B cell (primary cell): ENCODE measurements at regions of chr16 and their contacts with region 1.

Region 1: DNA sequence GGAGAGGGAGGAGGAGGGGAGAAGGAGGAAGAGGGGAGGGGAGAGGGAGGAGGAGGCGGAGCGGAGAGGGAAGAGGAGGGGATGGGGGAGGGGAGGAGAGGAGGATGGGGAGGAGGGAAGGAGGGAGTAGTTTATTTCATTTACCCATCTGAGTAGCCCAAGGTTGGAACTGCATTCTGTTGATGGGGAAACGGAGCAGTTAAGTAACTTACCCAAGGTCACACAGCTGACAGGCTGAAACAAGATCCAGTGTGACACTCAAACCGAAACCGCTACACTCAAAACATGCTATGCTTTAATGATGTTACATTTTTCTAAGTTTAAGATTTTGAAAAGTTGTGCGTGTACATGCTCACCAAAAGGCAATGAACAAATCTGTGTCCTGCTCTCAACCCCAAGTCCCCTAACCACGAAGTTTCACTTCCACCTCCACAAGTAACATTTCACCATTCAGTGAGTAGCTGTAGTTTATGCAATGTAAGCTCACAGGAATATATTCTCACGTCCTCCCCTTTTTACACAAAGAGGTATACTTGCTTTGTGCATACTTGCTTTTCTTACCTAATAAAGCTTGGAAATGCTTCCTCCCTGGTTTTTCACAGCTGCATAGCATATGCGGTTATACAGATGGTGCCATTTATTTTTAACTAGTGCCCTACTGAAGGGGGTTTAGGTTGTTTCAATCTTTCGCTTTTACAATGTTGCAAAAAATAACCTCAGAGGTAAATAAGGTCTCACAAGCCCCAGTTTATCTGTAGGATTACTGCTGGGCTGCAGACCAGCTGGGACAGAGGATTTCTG is 275.3 kb downstream of the PARN start:
- DNase-seq: peak; percentile 91
- ATAC-seq: peak; percentile 94
- H3K4me3 ChIP-seq: peak overlapping the region in 3 of 5 experiments; percentile 16 to 59 (median 48)
- H3K4me3 Mint-ChIP-seq: peak overlapping the region; percentile 30
- H3K27ac ChIP-seq: peak overlapping the region; percentile 39 to 61
- H3K27ac Mint-ChIP-seq: peak overlapping the region; percentile 43
- H3K4me1 ChIP-seq: peaks cover 8 to 25% of the 10 kb centered on the region in 2 donors
- H3K4me1 Mint-ChIP-seq: peaks cover 29% of the 10 kb centered on the region
- H3K27me3 ChIP-seq: no peaks in the 10 kb centered on the region
- H3K27me3 Mint-ChIP-seq: no peaks in the 10 kb centered on the region
- CTCF ChIP-seq: no peak

Region 2: GRCh38 chr16:14121142-14121541 is 233.6 kb before region 1 on chr16:
- CTCF ChIA-PET with region 1: no interaction called
- POLR2A ChIA-PET with region 1: no interaction called
- intact Hi-C with region 1: no loop called
- DNase-seq: no peak
- ATAC-seq: no peak
- H3K4me3 ChIP-seq: no peak overlapping the region
- H3K4me3 Mint-ChIP-seq: no peak overlapping the region
- H3K27ac ChIP-seq: no peak overlapping the region
- H3K27ac Mint-ChIP-seq: no peak overlapping the region
- H3K4me1 ChIP-seq: peaks cover 0 to 5% of the 10 kb centered on the region in 2 donors
- H3K4me1 Mint-ChIP-seq: peaks cover 32% of the 10 kb centered on the region
- H3K27me3 ChIP-seq: no peaks in the 10 kb centered on the region
- H3K27me3 Mint-ChIP-seq: no peaks in the 10 kb centered on the region
- CTCF ChIP-seq: no peak

Region 3: DNA sequence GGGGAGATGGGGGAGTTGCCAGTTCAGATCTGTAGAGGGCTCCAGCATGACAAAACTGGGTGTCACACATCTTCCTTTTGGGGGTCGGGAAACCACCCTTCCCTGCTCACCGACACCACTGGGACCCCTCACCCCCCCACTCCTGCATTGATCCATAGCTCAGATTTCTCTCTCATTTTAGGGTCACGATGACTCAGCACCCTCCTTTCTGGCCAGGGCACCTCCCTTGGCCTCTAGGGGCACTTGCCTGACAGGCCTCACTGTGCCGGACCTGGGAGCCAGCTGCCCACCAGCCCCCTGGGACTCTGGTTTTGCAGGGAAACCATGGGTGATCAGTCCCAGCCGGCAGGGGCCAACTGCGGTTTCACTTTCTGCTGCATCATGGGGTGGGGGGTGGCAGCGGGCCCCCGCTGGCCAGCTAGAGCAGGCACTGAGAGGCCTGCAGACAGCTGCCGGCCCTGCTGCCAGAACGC is 44.2 kb before region 1 on chr16:
- CTCF ChIA-PET with region 1: no interaction called
- POLR2A ChIA-PET with region 1: interaction called, 9 read pairs
- intact Hi-C with region 1: loop called (anchors 1 kb)
- DNase-seq: peak; percentile 28
- ATAC-seq: peak; percentile 62
- H3K4me3 ChIP-seq: no peak overlapping the region
- H3K4me3 Mint-ChIP-seq: peak overlapping the region; percentile 54
- H3K27ac ChIP-seq: no peak overlapping the region
- H3K27ac Mint-ChIP-seq: no peak overlapping the region
- H3K4me1 ChIP-seq: peaks cover 22 to 27% of the 10 kb centered on the region in 2 donors
- H3K4me1 Mint-ChIP-seq: peaks cover 23% of the 10 kb centered on the region
- H3K27me3 ChIP-seq: peaks cover 0 to 5% (median 0%) of the 10 kb centered on the region in 4 experiments
- H3K27me3 Mint-ChIP-seq: peaks cover 4% of the 10 kb centered on the region
- CTCF ChIP-seq: no peak

Region 4: GRCh38 chr16:14372471-14372870 is 17.7 kb after region 1 on chr16:
- CTCF ChIA-PET with region 1: interaction called, 3 read pairs
- POLR2A ChIA-PET with region 1: interaction called, 10 read pairs
- intact Hi-C with region 1: no loop called
- DNase-seq: no peak
- ATAC-seq: no peak
- H3K4me3 ChIP-seq: no peak overlapping the region
- H3K4me3 Mint-ChIP-seq: no peak overlapping the region
- H3K27ac ChIP-seq: no peak overlapping the region
- H3K27ac Mint-ChIP-seq: no peak overlapping the region
- H3K4me1 ChIP-seq: no peaks in the 10 kb centered on the region
- H3K4me1 Mint-ChIP-seq: no peaks in the 10 kb centered on the region
- H3K27me3 ChIP-seq: no peaks in the 10 kb centered on the region
- H3K27me3 Mint-ChIP-seq: no peaks in the 10 kb centered on the region
- CTCF ChIP-seq: no peak

Region 5: DNA sequence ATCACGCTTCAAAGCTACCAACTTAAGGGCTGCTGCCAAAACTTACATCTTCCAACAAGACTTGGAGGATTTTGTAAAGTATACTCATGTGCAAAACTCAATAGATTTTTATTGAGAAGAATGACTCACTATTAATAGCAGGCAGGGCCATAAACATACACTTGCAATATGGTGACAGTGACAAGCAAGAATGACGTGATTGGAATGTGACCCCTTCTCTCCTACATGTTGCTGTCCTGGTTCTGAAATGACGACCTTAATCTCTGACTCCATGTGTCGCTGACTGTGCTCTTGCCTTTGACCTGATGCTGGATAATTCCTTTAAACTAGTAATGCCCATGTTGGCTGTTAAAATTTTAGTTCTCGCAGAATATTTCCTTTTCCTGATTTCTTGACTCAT is 100.8 kb after region 1 on chr16:
- CTCF ChIA-PET with region 1: no interaction called
- POLR2A ChIA-PET with region 1: no interaction called
- intact Hi-C with region 1: no loop called
- DNase-seq: no peak
- ATAC-seq: no peak
- H3K4me3 ChIP-seq: no peak overlapping the region
- H3K4me3 Mint-ChIP-seq: no peak overlapping the region
- H3K27ac ChIP-seq: no peak overlapping the region
- H3K27ac Mint-ChIP-seq: no peak overlapping the region
- H3K4me1 ChIP-seq: no peaks in the 10 kb centered on the region
- H3K4me1 Mint-ChIP-seq: no peaks in the 10 kb centered on the region
- H3K27me3 ChIP-seq: no peaks in the 10 kb centered on the region
- H3K27me3 Mint-ChIP-seq: no peaks in the 10 kb centered on the region
- CTCF ChIP-seq: no peak

Region 6: GRCh38 chr16:14501331-14502255 is 146.8 kb after region 1 on chr16:
- CTCF ChIA-PET with region 1: no interaction called
- POLR2A ChIA-PET with region 1: no interaction called
- intact Hi-C with region 1: no loop called
- DNase-seq: no peak
- ATAC-seq: no peak
- H3K4me3 ChIP-seq: no peak overlapping the region
- H3K4me3 Mint-ChIP-seq: no peak overlapping the region
- H3K27ac ChIP-seq: no peak overlapping the region
- H3K27ac Mint-ChIP-seq: no peak overlapping the region
- H3K4me1 ChIP-seq: no peaks in the 10 kb centered on the region
- H3K4me1 Mint-ChIP-seq: peaks cover 4% of the 10 kb centered on the region
- H3K27me3 ChIP-seq: no peaks in the 10 kb centered on the region
- H3K27me3 Mint-ChIP-seq: no peaks in the 10 kb centered on the region
- CTCF ChIP-seq: no peak

Region 7: GRCh38 chr16:14641926-14642325 is 287.2 kb after region 1 on chr16:
- CTCF ChIA-PET with region 1: no interaction called
- POLR2A ChIA-PET with region 1: no interaction called
- intact Hi-C with region 1: no loop called
- DNase-seq: no peak
- ATAC-seq: no peak
- H3K4me3 ChIP-seq: no peak overlapping the region
- H3K4me3 Mint-ChIP-seq: no peak overlapping the region
- H3K27ac ChIP-seq: peak overlapping the region in 1 of 2 donors; percentile 3
- H3K27ac Mint-ChIP-seq: peak overlapping the region; percentile 15
- H3K4me1 ChIP-seq: peaks cover 0 to 4% of the 10 kb centered on the region in 2 donors
- H3K4me1 Mint-ChIP-seq: peaks cover 26% of the 10 kb centered on the region
- H3K27me3 ChIP-seq: no peaks in the 10 kb centered on the region
- H3K27me3 Mint-ChIP-seq: no peaks in the 10 kb centered on the region
- CTCF ChIP-seq: no peak

Region 8: DNA sequence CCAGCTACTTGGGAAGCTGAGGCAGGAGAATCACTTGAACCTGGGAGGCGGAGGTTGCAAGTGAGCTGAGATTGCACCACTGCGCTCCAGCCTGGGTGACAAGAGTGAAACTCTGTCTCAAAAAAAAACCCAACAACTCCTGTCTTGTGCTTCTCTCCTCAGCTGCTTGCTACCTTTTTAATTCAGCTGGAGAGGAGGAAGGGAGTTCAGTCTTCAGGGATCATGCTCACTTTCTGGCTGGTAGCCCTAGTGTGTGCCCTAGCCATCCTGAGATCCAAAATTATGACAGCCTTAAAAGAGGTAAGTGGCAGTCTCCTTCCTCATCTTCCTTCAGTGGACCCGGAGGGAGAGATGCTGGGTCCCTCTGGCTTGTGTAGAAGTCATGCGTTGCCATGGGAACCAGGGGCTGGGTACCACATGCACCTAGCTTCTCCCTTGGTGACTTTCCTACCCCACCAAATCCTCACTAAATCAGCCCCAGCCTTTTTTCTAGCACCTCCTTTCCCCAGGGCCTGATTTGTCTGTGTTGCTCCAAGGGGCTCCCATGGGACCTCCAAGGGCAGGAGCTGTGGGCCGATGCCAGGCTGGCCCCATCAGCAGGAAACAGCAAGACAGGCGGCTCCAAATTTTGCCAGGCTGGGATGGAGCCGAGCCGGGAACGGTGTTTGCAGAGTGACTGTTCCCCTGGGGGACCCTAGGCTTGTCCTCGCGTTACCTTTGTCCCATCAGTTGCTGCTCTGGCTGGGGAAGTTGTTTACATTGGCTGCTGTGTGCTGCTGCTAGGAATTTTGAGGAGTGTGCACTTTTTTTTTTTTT is 1659.8 kb after region 1 on chr16:
- CTCF ChIA-PET with region 1: no interaction called
- POLR2A ChIA-PET with region 1: interaction called, 11 read pairs
- intact Hi-C with region 1: no loop called
- DNase-seq: no peak
- ATAC-seq: no peak
- H3K4me3 ChIP-seq: no peak overlapping the region
- H3K4me3 Mint-ChIP-seq: no peak overlapping the region
- H3K27ac ChIP-seq: no peak overlapping the region
- H3K27ac Mint-ChIP-seq: no peak overlapping the region
- H3K4me1 ChIP-seq: peaks cover 0 to 5% of the 10 kb centered on the region in 2 donors
- H3K4me1 Mint-ChIP-seq: peaks cover 18% of the 10 kb centered on the region
- H3K27me3 ChIP-seq: no peaks in the 10 kb centered on the region
- H3K27me3 Mint-ChIP-seq: no peaks in the 10 kb centered on the region
- CTCF ChIP-seq: no peak